ENCODE measurements at regions of chr2 and their contacts with region 1.

Region 1: DNA sequence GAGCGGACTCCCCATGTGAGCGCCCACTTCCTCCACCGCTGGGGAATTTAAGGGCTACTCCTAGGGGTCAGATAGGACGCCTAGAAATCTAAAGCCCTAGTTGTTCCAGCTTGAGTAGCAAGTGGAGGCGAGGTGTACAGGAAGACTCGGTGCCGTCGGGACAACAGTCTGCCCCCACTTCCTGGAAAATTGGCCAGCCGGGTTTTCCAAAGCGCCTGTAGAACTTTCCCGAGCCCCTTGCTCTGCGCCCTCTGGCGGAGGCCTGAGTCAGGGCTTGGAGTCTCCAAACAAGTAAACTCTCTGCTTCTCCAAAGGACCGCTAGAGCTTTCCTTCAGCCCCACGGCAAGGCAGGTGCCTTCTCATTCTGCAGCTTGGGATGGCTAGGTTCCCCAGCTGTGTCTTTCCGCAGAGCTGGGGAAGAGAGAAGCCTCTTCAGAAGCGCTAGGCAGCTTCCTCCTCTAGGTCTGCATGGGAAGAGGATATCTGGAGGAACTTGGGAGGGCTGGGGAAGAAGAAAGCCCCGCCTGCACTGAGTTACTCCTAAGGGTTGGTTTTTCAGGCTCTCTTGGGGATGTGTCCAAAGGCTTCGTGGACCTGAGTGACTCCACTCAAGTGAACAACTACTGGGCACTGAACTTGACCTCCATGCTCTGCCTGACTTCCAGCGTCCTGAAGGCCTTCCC is 688 bp downstream of the SPR start:
- DNase-seq: peak; percentile 71
- H3K4me3 Mint-ChIP-seq: peak overlapping the region; percentile 69
- H3K27ac Mint-ChIP-seq: no peak overlapping the region
- H3K4me1 Mint-ChIP-seq: peaks cover 11% of the 10 kb centered on the region
- H3K27me3 Mint-ChIP-seq: peaks cover 64% of the 10 kb centered on the region

Region 2: DNA sequence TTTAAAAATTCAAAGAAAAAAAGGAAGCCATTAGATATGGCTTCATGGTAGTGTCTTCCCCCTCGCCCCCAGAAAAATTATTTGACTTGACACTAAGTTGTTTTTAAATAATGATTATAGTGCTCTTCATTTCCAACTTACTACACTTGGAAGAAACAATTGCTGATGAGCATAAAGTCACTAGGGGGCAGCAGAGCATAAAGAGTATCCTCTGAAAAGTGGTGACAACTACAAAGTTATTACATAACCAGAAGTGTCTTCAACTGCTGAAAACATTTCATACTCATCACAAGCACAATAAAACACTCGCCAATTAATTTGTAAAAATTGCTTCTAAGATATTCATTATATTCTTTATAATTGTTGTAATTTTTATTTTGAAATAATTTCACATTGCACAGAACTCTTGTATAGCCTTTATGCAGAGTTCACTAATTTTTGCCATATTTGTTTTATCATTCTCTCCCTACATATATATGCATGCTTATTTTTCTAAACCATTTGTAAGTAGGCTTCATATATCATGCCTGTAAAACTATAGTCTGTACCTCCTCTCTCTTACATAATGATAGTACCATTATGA is 116.9 kb before region 1 on chr2:
- CTCF ChIA-PET with region 1: interaction called, 12 read pairs
- POLR2A ChIA-PET with region 1: no interaction called
- intact Hi-C with region 1: loop called (anchors 1 kb)
- DNase-seq: peak; percentile 38
- H3K4me3 Mint-ChIP-seq: no peak overlapping the region
- H3K27ac Mint-ChIP-seq: no peak overlapping the region
- H3K4me1 Mint-ChIP-seq: no peaks in the 10 kb centered on the region
- H3K27me3 Mint-ChIP-seq: no peaks in the 10 kb centered on the region

Region 3: GRCh38 chr2:72837171-72837570 is 50.7 kb before region 1 on chr2:
- CTCF ChIA-PET with region 1: no interaction called
- POLR2A ChIA-PET with region 1: no interaction called
- intact Hi-C with region 1: no loop called
- DNase-seq: no peak
- H3K4me3 Mint-ChIP-seq: no peak overlapping the region
- H3K27ac Mint-ChIP-seq: no peak overlapping the region
- H3K4me1 Mint-ChIP-seq: peaks cover 5% of the 10 kb centered on the region
- H3K27me3 Mint-ChIP-seq: peaks cover 14% of the 10 kb centered on the region

Region 4: GRCh38 chr2:72915907-72916742 is 28.2 kb after region 1 on chr2:
- CTCF ChIA-PET with region 1: interaction called, 13 read pairs
- POLR2A ChIA-PET with region 1: no interaction called
- intact Hi-C with region 1: no loop called
- DNase-seq: peak; percentile 61
- H3K4me3 Mint-ChIP-seq: peak overlapping the region; percentile 66
- H3K27ac Mint-ChIP-seq: no peak overlapping the region
- H3K4me1 Mint-ChIP-seq: peaks cover 26% of the 10 kb centered on the region
- H3K27me3 Mint-ChIP-seq: peaks cover 73% of the 10 kb centered on the region

Region 5: DNA sequence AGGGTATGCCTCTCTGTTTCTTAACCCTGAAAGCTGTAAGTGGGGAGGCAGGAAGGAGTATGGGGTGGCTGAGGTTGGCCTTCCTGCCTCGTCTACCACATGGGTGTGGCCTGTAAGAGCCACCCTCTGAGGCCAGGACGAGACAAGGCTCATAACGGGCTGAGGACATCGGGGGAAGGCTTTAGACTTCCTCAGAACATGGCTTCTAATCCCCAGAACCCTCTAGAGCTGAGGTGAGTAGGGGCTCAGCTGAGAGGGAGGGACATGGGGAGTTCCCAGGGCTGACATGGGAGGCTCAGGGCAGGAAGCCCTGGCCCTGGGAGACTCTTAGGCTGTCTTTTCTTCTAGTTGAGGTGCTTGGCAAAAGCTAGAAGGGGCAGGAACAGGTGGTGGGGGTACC is 66.1 kb after region 1 on chr2:
- CTCF ChIA-PET with region 1: interaction called, 11 read pairs
- POLR2A ChIA-PET with region 1: no interaction called
- intact Hi-C with region 1: no loop called
- DNase-seq: peak; percentile 35
- H3K4me3 Mint-ChIP-seq: no peak overlapping the region
- H3K27ac Mint-ChIP-seq: no peak overlapping the region
- H3K4me1 Mint-ChIP-seq: peaks cover 9% of the 10 kb centered on the region
- H3K27me3 Mint-ChIP-seq: no peaks in the 10 kb centered on the region

Region 6: GRCh38 chr2:73085691-73086360 is 197.9 kb after region 1 on chr2:
- CTCF ChIA-PET with region 1: interaction called, 13 read pairs
- POLR2A ChIA-PET with region 1: no interaction called
- intact Hi-C with region 1: no loop called
- DNase-seq: peak; percentile 88
- H3K4me3 Mint-ChIP-seq: no peak overlapping the region
- H3K27ac Mint-ChIP-seq: no peak overlapping the region
- H3K4me1 Mint-ChIP-seq: no peaks in the 10 kb centered on the region
- H3K27me3 Mint-ChIP-seq: no peaks in the 10 kb centered on the region

Region 7: DNA sequence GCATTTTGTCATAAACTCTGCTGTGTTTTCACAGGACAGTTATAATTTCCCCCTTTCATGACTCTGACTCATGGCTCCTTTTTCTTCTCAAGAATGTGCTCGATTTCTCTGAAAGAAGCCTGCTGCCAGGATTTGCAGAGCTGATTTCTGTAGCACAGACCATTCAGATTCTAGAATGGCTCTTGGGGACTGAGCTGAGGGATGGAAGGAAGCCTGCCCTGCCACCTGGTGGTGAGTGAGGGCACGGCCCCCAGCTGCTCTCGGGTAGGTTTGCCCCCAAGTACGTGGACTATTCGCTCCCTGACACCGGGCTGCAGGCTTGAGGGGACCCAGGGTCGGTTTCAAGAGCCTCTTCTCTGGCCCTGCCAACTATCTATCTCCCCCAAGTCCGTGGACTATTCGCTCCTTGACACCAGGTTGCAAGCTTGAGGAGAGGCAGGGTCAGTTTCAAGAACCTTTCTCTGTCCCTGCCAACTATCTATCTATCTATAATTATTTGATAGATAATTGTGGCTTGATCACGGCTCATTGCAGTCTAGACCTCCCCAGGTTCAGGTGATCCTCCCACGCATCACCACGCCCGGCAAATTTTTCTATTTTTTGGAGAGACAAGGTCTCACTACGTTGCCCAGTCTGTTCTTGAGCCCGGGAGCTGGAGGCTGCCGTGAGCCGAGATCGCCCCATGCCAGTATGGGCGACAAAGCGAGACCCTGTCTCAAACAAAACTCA is 324.7 kb after region 1 on chr2:
- CTCF ChIA-PET with region 1: interaction called, 15 read pairs
- POLR2A ChIA-PET with region 1: no interaction called
- intact Hi-C with region 1: loop called (anchors 5 kb)
- DNase-seq: peak; percentile 86
- H3K4me3 Mint-ChIP-seq: no peak overlapping the region
- H3K27ac Mint-ChIP-seq: no peak overlapping the region
- H3K4me1 Mint-ChIP-seq: peaks cover 39% of the 10 kb centered on the region
- H3K27me3 Mint-ChIP-seq: peaks cover 5% of the 10 kb centered on the region

Measured in activated CD4-positive, alpha-beta memory T cell treated with anti-CD3 and anti-CD28 coated beads for 36 hours (primary cell).